ENCODE measurements at regions of chr19 and their contacts with region 1.

Region 1: GRCh38 chr19:44657211-44657921 is 13.7 kb downstream of the PVR start:
- DNase-seq: peak; percentile 43 to 87 (median 60)
- ATAC-seq: peak; percentile 56
- H3K4me3 ChIP-seq: no peak overlapping the region
- H3K27ac ChIP-seq: no peak overlapping the region
- H3K4me1 ChIP-seq: peaks cover 0 to 17% of the 10 kb centered on the region in 2 donors
- H3K27me3 ChIP-seq: no peaks in the 10 kb centered on the region
- CTCF ChIP-seq: peak; percentile 95 to 99

Region 2: GRCh38 chr19:44430956-44431355 is 226.4 kb before region 1 on chr19:
- intact Hi-C with region 1: no loop called
- DNase-seq: no peak
- ATAC-seq: no peak
- H3K4me3 ChIP-seq: no peak overlapping the region
- H3K27ac ChIP-seq: no peak overlapping the region
- H3K4me1 ChIP-seq: no peaks in the 10 kb centered on the region
- H3K27me3 ChIP-seq: no peaks in the 10 kb centered on the region
- CTCF ChIP-seq: no peak

Region 3: GRCh38 chr19:44570984-44571684 is 86.2 kb before region 1 on chr19:
- intact Hi-C with region 1: loop called (anchors 5 kb)
- DNase-seq: peak in 3 of 4 donors; percentile 44 to 78 (median 68)
- ATAC-seq: peak; percentile 95
- H3K4me3 ChIP-seq: no peak overlapping the region
- H3K27ac ChIP-seq: no peak overlapping the region
- H3K4me1 ChIP-seq: peaks cover 0 to 4% of the 10 kb centered on the region in 2 donors
- H3K27me3 ChIP-seq: peaks cover 0 to 7% of the 10 kb centered on the region in 2 donors
- CTCF ChIP-seq: peak; percentile 83 to 88

Region 4: GRCh38 chr19:44576843-44577565 is 80.4 kb before region 1 on chr19:
- intact Hi-C with region 1: loop called (anchors 5 kb)
- DNase-seq: peak in 1 of 4 donors; percentile 40
- ATAC-seq: peak; percentile 95
- H3K4me3 ChIP-seq: no peak overlapping the region
- H3K27ac ChIP-seq: no peak overlapping the region
- H3K4me1 ChIP-seq: no peaks in the 10 kb centered on the region
- H3K27me3 ChIP-seq: no peaks in the 10 kb centered on the region
- CTCF ChIP-seq: peak; percentile 26 to 64